SK-N-SH (cell line): ENCODE measurements at regions of chr11 and their contacts with region 1.

Region 1: DNA sequence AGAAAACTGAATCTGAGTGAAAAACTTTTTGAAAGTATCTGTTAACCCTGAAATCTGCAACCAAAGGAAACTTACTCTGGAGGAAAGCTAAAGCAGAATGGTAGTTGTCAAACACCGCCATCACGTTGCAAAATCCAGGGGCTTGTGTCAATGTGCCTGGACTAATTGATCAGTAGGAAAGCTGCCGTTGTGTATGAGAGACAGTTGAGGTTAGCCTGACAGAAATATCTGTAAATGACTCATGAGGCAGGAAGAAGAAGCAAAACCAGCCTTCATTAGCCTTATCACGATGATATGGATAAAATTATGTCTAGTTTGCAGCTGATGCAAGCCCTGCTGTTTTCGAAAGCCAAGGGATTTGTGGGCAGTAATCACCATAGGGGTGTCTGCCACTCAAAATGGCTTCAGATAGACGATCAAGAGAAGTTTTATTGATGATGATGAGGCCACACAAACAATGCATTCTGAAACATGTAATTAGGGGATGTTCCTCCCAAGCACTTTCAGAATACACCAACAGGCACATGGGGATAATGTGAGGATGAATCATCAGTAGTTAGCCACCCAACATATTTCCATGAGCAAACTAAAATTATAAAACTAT is 8.9 kb downstream of the SCGB1A1 start:
- DNase-seq: peak; percentile 47
- H3K4me3 ChIP-seq: no peak overlapping the region
- H3K27ac ChIP-seq: peak overlapping the region; percentile 76 to 77
- H3K4me1 ChIP-seq: peaks cover 18 to 39% of the 10 kb centered on the region in 2 experiments
- H3K27me3 ChIP-seq: no peaks in the 10 kb centered on the region
- CTCF ChIP-seq: no peak
- EP300 ChIP-seq: peak in 1 of 2 experiments; percentile 79; a peak in 2 of 4 replicates
- RAD21 ChIP-seq: peak; percentile 18; the same call in 1 of the 2 replicates

Region 2: GRCh38 chr11:62411524-62411923 is 16.2 kb before region 1 on chr11:
- CTCF ChIA-PET with region 1: interaction called, 29 read pairs
- POLR2A ChIA-PET with region 1: no interaction called
- DNase-seq: no peak
- H3K4me3 ChIP-seq: no peak overlapping the region
- H3K27ac ChIP-seq: no peak overlapping the region; a peak in 1 of 4 replicates
- H3K4me1 ChIP-seq: peaks cover 0 to 22% of the 10 kb centered on the region in 2 experiments; a peak in 1 of 4 replicates
- H3K27me3 ChIP-seq: no peaks in the 10 kb centered on the region
- CTCF ChIP-seq: no peak
- EP300 ChIP-seq: no peak
- RAD21 ChIP-seq: no peak

Region 3: GRCh38 chr11:62444236-62444833 is 16.6 kb after region 1 on chr11:
- CTCF ChIA-PET with region 1: interaction called, 17 read pairs
- POLR2A ChIA-PET with region 1: interaction called, 3 read pairs
- DNase-seq: peak; percentile 92
- H3K4me3 ChIP-seq: peak overlapping the region; percentile 55 to 69
- H3K27ac ChIP-seq: peak overlapping the region; percentile 83 to 91
- H3K4me1 ChIP-seq: peaks cover 19 to 22% of the 10 kb centered on the region in 2 experiments
- H3K27me3 ChIP-seq: no peaks in the 10 kb centered on the region
- CTCF ChIP-seq: no peak
- EP300 ChIP-seq: no peak
- RAD21 ChIP-seq: no peak

Region 4: DNA sequence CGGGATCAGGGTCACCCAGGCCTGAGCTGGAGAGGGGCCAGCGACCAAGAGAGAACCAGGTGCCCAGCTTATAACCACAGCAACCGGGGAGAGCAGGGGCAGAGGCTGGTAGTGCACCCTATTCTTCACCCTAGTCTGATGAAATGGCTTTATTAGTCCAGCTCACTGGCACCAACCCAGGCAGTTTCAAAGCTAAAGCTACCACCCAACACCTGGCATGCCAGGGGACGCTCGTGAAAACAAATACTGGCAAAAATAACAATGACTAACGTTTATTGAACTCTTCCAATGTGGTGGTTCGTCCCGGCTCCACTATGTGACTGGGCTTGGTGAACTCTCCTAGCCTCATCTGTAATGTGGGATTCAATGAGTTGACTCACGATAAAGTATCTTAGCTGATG is 21.7 kb after region 1 on chr11:
- CTCF ChIA-PET with region 1: interaction called, 17 read pairs
- POLR2A ChIA-PET with region 1: interaction called, 3 read pairs
- DNase-seq: no peak
- H3K4me3 ChIP-seq: no peak overlapping the region
- H3K27ac ChIP-seq: no peak overlapping the region
- H3K4me1 ChIP-seq: peaks cover 6% of the 10 kb centered on the region in 2 experiments
- H3K27me3 ChIP-seq: no peaks in the 10 kb centered on the region
- CTCF ChIP-seq: no peak
- EP300 ChIP-seq: no peak
- RAD21 ChIP-seq: no peak

Region 5: GRCh38 chr11:62556108-62556871 is 128.6 kb after region 1 on chr11:
- CTCF ChIA-PET with region 1: interaction called, 21 read pairs
- POLR2A ChIA-PET with region 1: no interaction called
- DNase-seq: peak; percentile 90
- H3K4me3 ChIP-seq: no peak overlapping the region; a peak in 1 of 4 replicates
- H3K27ac ChIP-seq: peak overlapping the region; percentile 85 to 97
- H3K4me1 ChIP-seq: peaks cover 40 to 79% of the 10 kb centered on the region in 2 experiments
- H3K27me3 ChIP-seq: no peaks in the 10 kb centered on the region
- CTCF ChIP-seq: no peak
- EP300 ChIP-seq: peak in 1 of 2 experiments; percentile 42; a peak in 1 of 4 replicates
- RAD21 ChIP-seq: no peak